Mucosa of descending colon (tissue), 3 donors: ENCODE measurements at regions of chr18 and their contacts with region 1.

Region 1: GRCh38 chr18:66046032-66046602 is 295.3 kb downstream of the CDH7 start:
- DNase-seq: peak in 1 of 3 donors; percentile 23
- ATAC-seq: peak; percentile 93
- H3K4me3 ChIP-seq: no peak overlapping the region
- H3K4me1 ChIP-seq: peaks cover 3% of the 10 kb centered on the region
- CTCF ChIP-seq: no peak

Region 2: GRCh38 chr18:65725251-65726050 is 320.7 kb before region 1 on chr18:
- intact Hi-C with region 1: loop called in 1 of 2 experiments (anchors 10 kb)
- DNase-seq: peak in 2 of 3 donors; percentile 61 to 69
- ATAC-seq: peak; percentile 62
- H3K4me3 ChIP-seq: no peak overlapping the region
- H3K4me1 ChIP-seq: no peaks in the 10 kb centered on the region
- CTCF ChIP-seq: no peak